Thyroid gland (tissue), 4 donors: ENCODE measurements at regions of chrX and their contacts with region 1.

Region 1: DNA sequence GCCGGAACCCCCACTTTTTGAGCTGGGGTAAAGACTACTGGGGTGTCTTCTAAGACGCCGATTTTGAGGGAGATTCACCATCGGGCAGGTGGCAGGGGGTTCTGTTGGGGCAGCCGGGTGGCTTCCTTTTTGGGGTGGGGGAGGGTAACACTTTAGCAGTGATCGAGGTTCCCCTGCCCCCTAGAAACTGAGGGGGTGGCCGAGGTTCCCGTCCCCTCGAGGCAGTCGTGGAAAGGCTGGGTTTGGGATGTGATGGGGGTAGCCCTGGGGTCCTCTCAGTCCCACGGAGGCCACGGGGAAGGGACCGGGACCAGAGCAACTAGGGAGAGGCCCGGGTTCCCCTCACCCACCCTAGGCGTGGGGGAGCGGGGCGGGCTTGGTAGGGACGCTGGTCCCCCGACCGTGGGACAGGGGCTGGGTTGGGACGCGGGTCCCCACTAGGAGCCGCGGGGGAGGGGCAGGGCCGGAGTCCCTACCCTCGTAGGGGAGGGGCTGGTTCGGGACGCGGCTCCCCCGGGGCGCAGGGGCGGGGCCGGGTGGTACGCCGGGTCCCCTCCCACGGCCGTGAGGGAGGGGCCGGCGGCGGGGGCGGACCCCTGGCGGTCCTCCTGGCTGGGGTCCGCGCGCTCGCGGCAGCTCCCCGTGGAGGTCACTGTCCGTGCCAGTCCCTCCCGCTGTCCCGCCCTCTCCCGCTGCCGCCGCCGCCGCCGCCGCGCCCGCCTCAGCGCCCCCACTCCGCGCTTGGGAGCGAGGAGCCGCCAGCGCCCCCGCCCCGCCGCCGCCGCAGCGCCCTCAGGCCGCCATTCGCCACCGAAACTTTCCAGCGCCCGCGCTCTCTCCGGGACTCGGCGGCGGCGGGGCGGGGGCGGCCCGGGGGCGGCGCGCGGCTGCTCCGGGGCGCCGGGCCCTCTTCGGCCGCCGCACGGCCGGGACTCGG is at the start of gene TBL1X:
- DNase-seq: peak; percentile 52 to 62
- H3K4me3 ChIP-seq: peak within 1 kb of the TSS; percentile 33 to 41 (median 39)
- H3K27ac ChIP-seq: peak within 1 kb of the TSS; percentile 66 to 87 (median 78)
- H3K4me1 ChIP-seq: peaks cover 13 to 18% of the 10 kb centered on the region in 2 donors
- H3K27me3 ChIP-seq: peaks cover 3% of the 10 kb centered on the region
- CTCF ChIP-seq: no peak
- POLR2A ChIP-seq: peak in 1 of 2 donors; percentile 50
- total RNA-seq, gene TBL1X: 32.9 to 42.9 (median 33.4) TPM

Region 2: DNA sequence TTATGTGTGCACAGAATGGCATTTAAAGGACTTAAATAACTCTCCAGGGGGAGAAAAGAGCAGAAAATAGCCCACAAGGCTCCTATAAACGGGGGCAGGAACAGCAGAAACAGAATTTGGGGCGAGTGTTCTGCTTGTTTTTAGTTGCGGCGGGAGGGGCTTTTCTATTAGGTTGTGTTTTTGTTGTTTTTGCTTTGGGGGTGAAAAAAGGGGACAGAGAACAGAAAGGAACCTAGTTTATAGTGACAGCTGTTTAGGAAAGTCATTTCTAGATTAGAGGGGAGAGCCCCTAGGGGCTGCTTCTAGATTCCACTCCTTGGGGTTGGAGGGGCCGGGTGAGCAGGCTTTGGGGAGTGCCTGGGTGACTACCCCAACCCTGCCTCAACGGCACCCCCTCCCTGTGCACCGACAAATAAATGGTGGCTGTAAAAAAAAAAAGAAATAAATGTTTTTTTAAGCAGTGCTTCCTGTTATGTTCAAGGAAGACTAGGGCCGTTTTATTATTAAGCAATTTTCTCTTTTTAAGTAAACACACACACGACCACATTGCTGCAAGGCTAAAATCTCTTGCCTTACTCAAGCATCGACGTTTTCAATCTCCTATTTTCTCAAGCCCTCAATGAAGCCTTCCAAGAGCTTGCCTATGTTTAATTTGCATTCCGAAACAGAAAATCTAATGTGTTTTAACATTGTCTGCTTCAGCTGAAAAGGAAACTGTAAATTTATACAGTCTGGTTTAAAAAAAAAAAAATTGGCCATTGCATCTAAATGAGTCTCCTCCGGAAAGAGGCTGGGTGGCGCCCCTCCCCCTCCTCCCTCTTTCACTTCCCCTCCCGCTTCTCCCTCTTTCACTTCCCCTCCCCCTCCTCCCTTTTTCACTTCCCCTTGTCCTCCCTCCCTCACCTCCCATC is 123.2 kb before region 1 on chrX:
- intact Hi-C with region 1: loop called (anchors 5 kb)
- DNase-seq: peak; percentile 44 to 52
- H3K4me3 ChIP-seq: no peak overlapping the region
- H3K27ac ChIP-seq: peak overlapping the region; percentile 56 to 74 (median 65)
- H3K4me1 ChIP-seq: peaks cover 5 to 14% of the 10 kb centered on the region in 2 donors
- H3K27me3 ChIP-seq: no peaks in the 10 kb centered on the region
- CTCF ChIP-seq: no peak
- POLR2A ChIP-seq: no peak

Region 3: DNA sequence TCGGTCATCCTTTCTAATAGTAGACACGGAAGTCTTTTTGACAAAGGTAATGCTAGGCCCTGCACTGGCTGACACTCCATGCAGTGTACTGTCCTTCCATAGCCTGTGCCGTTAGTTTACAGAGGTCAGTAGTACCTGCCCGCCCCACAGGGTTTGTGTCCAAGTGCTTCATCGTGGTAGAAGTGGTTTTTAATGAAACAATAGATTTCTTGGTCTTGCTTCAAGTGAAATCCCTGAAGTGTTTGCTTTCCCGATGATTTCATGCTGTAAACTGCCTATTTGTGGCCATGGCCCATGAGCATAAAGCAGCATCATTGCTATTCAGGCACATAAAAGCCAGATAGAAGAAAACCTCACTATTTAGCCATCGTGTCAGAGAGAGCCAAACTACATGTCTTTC is 161.7 kb after region 1 on chrX:
- intact Hi-C with region 1: no loop called
- DNase-seq: peak; percentile 44 to 54
- H3K4me3 ChIP-seq: no peak overlapping the region
- H3K27ac ChIP-seq: no peak overlapping the region
- H3K4me1 ChIP-seq: no peaks in the 10 kb centered on the region
- H3K27me3 ChIP-seq: no peaks in the 10 kb centered on the region
- CTCF ChIP-seq: no peak
- POLR2A ChIP-seq: no peak

Region 4: GRCh38 chrX:9855561-9856283 is 391.0 kb after region 1 on chrX:
- intact Hi-C with region 1: no loop called
- DNase-seq: no peak
- H3K4me3 ChIP-seq: no peak overlapping the region
- H3K27ac ChIP-seq: no peak overlapping the region
- H3K4me1 ChIP-seq: no peaks in the 10 kb centered on the region
- H3K27me3 ChIP-seq: no peaks in the 10 kb centered on the region
- CTCF ChIP-seq: no peak
- POLR2A ChIP-seq: no peak